ENCODE measurements at regions of chr20 and their contacts with region 1.

Region 1: GRCh38 chr20:2523919-2524708 is 12.3 kb upstream of the TMC2 start:
- DNase-seq: peak; percentile 91
- ATAC-seq: peak; percentile 87
- H3K4me3 ChIP-seq: peak overlapping the region; percentile 52 to 94 (median 84)
- H3K4me3 Mint-ChIP-seq: peak overlapping the region; percentile 90
- H3K27ac ChIP-seq: peak overlapping the region; percentile 49 to 72
- H3K27ac Mint-ChIP-seq: peak overlapping the region; percentile 77
- H3K4me1 ChIP-seq: peaks cover 9 to 19% of the 10 kb centered on the region in 2 donors
- H3K4me1 Mint-ChIP-seq: peaks cover 12% of the 10 kb centered on the region
- H3K27me3 ChIP-seq: peaks cover 0 to 14% (median 3%) of the 10 kb centered on the region in 4 experiments
- H3K27me3 Mint-ChIP-seq: peaks cover 3% of the 10 kb centered on the region
- CTCF ChIP-seq: peak; percentile 97

Region 2: GRCh38 chr20:2335096-2335870 is 188.8 kb before region 1 on chr20:
- CTCF ChIA-PET with region 1: no interaction called
- POLR2A ChIA-PET with region 1: no interaction called
- intact Hi-C with region 1: no loop called
- DNase-seq: no peak
- ATAC-seq: no peak
- H3K4me3 ChIP-seq: no peak overlapping the region
- H3K4me3 Mint-ChIP-seq: no peak overlapping the region
- H3K27ac ChIP-seq: no peak overlapping the region
- H3K27ac Mint-ChIP-seq: no peak overlapping the region
- H3K4me1 ChIP-seq: no peaks in the 10 kb centered on the region
- H3K4me1 Mint-ChIP-seq: no peaks in the 10 kb centered on the region
- H3K27me3 ChIP-seq: peaks cover 0 to 2% (median 0%) of the 10 kb centered on the region in 4 experiments
- H3K27me3 Mint-ChIP-seq: peaks cover 19% of the 10 kb centered on the region
- CTCF ChIP-seq: no peak

Region 3: DNA sequence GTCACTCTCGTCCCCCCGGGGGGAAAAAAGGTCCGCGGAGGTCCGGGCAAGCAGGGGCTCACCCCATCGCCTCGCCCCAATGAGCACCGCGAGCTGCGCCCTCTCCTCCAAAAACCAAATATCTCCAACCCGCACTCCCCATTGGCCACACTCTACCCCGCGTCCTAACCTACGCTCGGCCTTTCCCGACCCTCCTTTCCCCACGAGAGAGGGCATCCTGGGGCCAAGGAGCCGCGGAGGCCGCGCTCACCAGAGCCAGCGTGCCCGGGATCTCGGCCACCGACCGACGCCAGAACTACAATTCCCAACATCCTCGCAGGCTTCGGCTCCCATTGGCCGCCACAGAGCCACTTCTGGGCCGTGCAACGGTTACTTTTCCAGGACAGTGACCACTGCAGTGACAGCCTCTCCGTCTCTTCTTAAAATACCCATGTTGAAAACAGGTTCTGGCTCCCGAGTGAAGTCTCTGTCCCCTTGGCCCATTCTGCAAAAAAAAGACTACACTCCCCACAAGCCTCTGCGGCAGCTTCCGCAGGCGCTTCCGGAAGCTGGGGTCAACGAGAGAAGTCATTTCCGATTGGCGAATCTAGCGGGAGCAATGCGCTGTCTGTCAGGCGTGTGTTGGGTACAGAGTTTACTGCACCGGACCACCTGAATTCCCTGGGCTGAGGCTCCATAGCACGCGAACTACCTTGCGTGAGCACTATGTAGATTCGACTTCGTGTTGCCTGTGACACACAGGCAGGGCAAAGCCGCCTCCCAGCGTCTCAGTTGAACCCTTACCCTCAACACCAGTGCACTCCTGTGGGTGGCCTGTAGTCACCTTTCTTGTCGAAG is 15.3 kb before region 1 on chr20 and contains the start of gene ZNF343:
- CTCF ChIA-PET with region 1: interaction called, 48 read pairs
- POLR2A ChIA-PET with region 1: interaction called, 4 read pairs
- intact Hi-C with region 1: loop called (anchors 1 kb)
- DNase-seq: peak; percentile 89
- ATAC-seq: peak; percentile 91
- H3K4me3 ChIP-seq: peak within 1 kb of the TSS; percentile 75 to 95 (median 91)
- H3K4me3 Mint-ChIP-seq: peak within 1 kb of the TSS; percentile 100
- H3K27ac ChIP-seq: peak within 1 kb of the TSS; percentile 64 to 77
- H3K27ac Mint-ChIP-seq: peak within 1 kb of the TSS; percentile 99
- H3K4me1 ChIP-seq: peaks cover 8 to 16% of the 10 kb centered on the region in 2 donors
- H3K4me1 Mint-ChIP-seq: peaks cover 20% of the 10 kb centered on the region
- H3K27me3 ChIP-seq: peaks cover 0 to 6% (median 3%) of the 10 kb centered on the region in 4 experiments
- H3K27me3 Mint-ChIP-seq: peaks cover 27% of the 10 kb centered on the region
- CTCF ChIP-seq: no peak
- total RNA-seq, gene ZNF343: 19.8 and 23.4 TPM in 2 replicates

Region 4: GRCh38 chr20:2538931-2539720 is 15.0 kb after region 1 on chr20:
- CTCF ChIA-PET with region 1: interaction called, 10 read pairs
- POLR2A ChIA-PET with region 1: no interaction called
- intact Hi-C with region 1: no loop called
- DNase-seq: no peak
- ATAC-seq: no peak
- H3K4me3 ChIP-seq: no peak overlapping the region
- H3K4me3 Mint-ChIP-seq: no peak overlapping the region
- H3K27ac ChIP-seq: no peak overlapping the region
- H3K27ac Mint-ChIP-seq: no peak overlapping the region
- H3K4me1 ChIP-seq: no peaks in the 10 kb centered on the region
- H3K4me1 Mint-ChIP-seq: no peaks in the 10 kb centered on the region
- H3K27me3 ChIP-seq: peaks cover 0 to 19% (median 2%) of the 10 kb centered on the region in 4 experiments
- H3K27me3 Mint-ChIP-seq: peaks cover 51% of the 10 kb centered on the region
- CTCF ChIP-seq: no peak

Region 5: GRCh38 chr20:2575682-2576081 is 51.6 kb after region 1 on chr20:
- CTCF ChIA-PET with region 1: no interaction called
- POLR2A ChIA-PET with region 1: no interaction called
- intact Hi-C with region 1: no loop called
- DNase-seq: no peak
- ATAC-seq: no peak
- H3K4me3 ChIP-seq: no peak overlapping the region
- H3K4me3 Mint-ChIP-seq: no peak overlapping the region
- H3K27ac ChIP-seq: no peak overlapping the region
- H3K27ac Mint-ChIP-seq: no peak overlapping the region
- H3K4me1 ChIP-seq: no peaks in the 10 kb centered on the region
- H3K4me1 Mint-ChIP-seq: no peaks in the 10 kb centered on the region
- H3K27me3 ChIP-seq: peaks cover 0 to 24% (median 11%) of the 10 kb centered on the region in 4 experiments
- H3K27me3 Mint-ChIP-seq: peaks cover 39% of the 10 kb centered on the region
- CTCF ChIP-seq: no peak

Region 6: DNA sequence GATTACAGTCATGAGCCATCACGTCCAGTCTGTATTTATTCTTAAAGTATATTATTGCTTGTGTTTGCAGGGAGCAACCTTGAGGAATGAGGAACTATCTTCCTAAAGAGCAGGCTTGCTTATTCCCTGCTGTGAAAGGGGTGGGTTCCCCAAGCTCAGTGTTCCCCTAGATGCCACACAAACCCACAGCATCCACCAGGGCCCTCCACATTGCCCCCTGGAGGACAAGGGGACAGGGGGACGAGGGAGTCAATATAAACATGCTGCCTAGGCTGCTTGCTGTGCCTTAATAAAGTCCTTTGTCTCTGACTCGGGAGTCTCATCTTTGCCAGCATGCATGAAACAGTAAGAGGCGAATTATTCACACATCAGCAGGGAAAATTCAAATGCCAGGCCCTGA is 147.9 kb after region 1 on chr20:
- CTCF ChIA-PET with region 1: interaction called, 3 read pairs
- POLR2A ChIA-PET with region 1: no interaction called
- intact Hi-C with region 1: loop called (anchors 1 kb)
- DNase-seq: no peak
- ATAC-seq: no peak
- H3K4me3 ChIP-seq: no peak overlapping the region
- H3K4me3 Mint-ChIP-seq: no peak overlapping the region
- H3K27ac ChIP-seq: no peak overlapping the region
- H3K27ac Mint-ChIP-seq: no peak overlapping the region
- H3K4me1 ChIP-seq: no peaks in the 10 kb centered on the region
- H3K4me1 Mint-ChIP-seq: no peaks in the 10 kb centered on the region
- H3K27me3 ChIP-seq: peaks cover 0 to 23% (median 2%) of the 10 kb centered on the region in 4 experiments
- H3K27me3 Mint-ChIP-seq: peaks cover 19% of the 10 kb centered on the region
- CTCF ChIP-seq: no peak